Ovary (tissue), 10 donors: ENCODE measurements at regions of chr10 and their contacts with region 1.

Region 1: DNA sequence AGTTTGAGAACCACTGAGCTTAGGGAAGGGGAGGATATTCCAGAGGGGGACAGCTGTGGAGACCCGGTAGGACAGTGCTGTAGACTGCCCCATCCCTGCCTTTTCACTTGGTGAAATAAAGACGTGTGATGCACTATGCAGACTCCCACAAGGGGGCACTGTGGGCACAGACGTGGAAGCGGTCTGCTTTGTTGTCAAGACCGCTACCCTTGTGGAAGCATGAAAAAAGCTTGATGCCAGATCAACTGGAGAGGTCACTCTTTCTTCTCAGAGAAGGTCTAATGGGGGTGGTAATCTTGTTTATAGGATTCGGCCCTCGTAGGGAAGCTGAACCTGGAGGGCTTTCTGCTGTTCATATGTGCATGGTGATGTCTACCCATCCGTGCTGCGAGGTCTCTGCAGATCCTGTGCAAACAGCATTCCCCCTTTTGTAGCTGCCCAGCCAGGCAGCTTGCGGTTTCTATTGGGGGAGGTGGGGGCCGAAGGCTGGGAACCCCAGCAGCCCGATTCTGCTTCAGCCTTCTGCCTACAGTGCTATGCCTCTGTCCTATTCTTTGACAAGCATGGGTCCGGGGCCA is 13.7 kb downstream of the RPS24 start:
- DNase-seq: peak; percentile 83 to 92 (median 91)
- H3K4me3 ChIP-seq: no peak overlapping the region
- H3K27ac ChIP-seq: no peak overlapping the region
- H3K4me1 ChIP-seq: no peaks in the 10 kb centered on the region
- H3K27me3 ChIP-seq: no peaks in the 10 kb centered on the region
- CTCF ChIP-seq: peak; percentile 77 to 83 (median 78)
- EP300 ChIP-seq: no peak
- POLR2A ChIP-seq: no peak

Region 2: DNA sequence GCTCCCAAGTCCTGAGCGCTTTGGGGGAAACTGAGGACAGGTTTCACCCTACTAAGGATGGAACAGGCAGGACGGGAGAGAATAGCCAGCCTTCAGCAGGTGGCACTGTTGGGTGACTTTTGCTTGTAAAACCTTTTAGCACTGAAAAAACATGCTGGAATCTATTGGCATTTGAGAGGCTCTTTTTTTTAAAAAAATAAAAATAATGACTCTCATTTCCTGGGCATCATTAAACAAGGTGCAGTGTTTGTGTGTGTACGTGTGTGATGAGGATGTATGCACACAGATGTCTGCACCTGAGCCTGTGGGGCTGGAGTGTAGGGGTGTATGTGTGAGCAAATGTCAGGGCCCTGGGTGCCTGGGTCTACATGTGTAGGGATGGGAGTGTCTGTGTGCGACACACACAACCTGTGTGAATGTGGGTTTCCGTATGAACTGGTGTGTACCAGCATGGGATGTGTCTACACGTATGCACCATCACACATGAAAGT is 164.2 kb after region 1 on chr10:
- intact Hi-C with region 1: loop called in 1 of 4 experiments (anchors 5 kb)
- DNase-seq: peak; percentile 52 to 69 (median 58)
- H3K4me3 ChIP-seq: no peak overlapping the region
- H3K27ac ChIP-seq: no peak overlapping the region
- H3K4me1 ChIP-seq: peaks cover 14% of the 10 kb centered on the region
- H3K27me3 ChIP-seq: no peaks in the 10 kb centered on the region
- CTCF ChIP-seq: peak in 2 of 3 donors; percentile 35 to 43
- EP300 ChIP-seq: no peak
- POLR2A ChIP-seq: no peak

Region 3: DNA sequence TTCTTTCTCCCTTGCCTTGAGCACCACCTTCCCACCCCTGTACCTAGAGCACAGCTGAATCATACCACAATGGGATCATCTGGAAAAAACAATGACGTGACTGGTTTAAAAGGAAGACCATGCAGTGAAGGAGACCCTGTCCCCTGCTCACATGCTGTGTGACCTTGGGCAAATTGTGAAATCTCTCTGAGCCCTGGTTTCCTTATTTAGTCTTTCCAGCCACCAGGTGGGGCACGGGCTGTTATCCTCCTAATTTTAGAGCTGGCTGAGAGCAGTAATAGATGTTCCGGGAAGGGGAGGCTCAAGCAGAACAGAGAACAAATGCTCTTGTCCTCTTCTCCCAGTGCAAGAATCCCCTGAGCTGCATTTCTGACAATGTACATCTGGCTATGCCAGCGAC is 184.5 kb after region 1 on chr10:
- intact Hi-C with region 1: no loop called
- DNase-seq: peak in 3 of 5 donors; percentile 37 to 50 (median 38)
- H3K4me3 ChIP-seq: no peak overlapping the region
- H3K27ac ChIP-seq: no peak overlapping the region
- H3K4me1 ChIP-seq: no peaks in the 10 kb centered on the region
- H3K27me3 ChIP-seq: no peaks in the 10 kb centered on the region
- CTCF ChIP-seq: peak in 1 of 3 donors; percentile 19
- EP300 ChIP-seq: no peak
- POLR2A ChIP-seq: no peak

Region 4: DNA sequence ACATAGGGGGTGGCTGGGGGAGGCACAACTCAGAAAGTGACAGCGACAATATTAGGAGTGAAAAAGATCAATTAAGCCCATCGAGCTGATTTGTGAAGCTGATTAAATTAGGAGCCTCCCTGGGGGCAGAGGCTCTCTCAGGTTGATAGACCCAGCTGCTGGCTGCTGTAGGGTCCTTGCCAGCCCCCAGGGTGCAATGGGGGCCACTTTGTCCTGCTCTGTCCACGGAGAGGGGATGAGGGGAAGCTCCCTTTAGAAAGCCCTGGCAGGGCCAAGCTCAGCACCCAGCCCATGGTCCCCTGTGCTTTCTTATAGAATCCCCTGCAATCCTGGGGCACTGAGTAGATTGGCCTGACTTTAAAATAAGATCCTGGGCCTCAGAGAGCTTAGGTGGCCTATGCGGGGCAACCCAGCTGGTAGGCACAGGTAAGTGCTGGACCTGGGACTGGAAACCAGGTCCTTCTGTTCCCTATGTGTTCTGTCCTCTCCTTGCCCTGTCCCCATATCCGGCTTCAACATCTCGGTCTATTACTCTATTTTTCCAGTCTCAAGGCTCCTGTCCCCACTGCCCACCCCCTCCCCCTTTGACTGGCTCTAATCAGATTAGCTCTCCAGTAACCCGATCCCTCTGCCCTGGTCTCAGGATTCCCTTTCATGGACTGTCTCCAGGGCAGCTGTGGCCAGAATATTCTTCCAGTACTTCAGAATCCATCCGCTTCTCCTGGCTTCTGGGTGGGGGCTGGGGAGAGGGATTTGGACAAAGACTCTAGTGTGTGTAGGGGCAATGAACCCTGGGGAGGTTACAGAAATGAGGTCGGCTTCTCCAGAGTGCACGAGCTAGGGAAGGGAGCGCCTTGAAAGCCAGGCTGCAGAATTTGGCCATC is 245.8 kb after region 1 on chr10:
- intact Hi-C with region 1: no loop called
- DNase-seq: no peak
- H3K4me3 ChIP-seq: no peak overlapping the region
- H3K27ac ChIP-seq: no peak overlapping the region
- H3K4me1 ChIP-seq: no peaks in the 10 kb centered on the region
- H3K27me3 ChIP-seq: no peaks in the 10 kb centered on the region
- CTCF ChIP-seq: no peak
- EP300 ChIP-seq: no peak
- POLR2A ChIP-seq: no peak